Activated CD4-positive, alpha-beta memory T cell treated with anti-CD3 and anti-CD28 coated beads for 36 hours (primary cell): ENCODE measurements at regions of chr19 and their contacts with region 1.

Region 1: GRCh38 chr19:17623224-17623935 is 64.8 kb downstream of the UNC13A start:
- DNase-seq: no peak
- H3K4me3 Mint-ChIP-seq: no peak overlapping the region
- H3K27ac Mint-ChIP-seq: no peak overlapping the region
- H3K4me1 Mint-ChIP-seq: peaks cover 3% of the 10 kb centered on the region
- H3K27me3 Mint-ChIP-seq: peaks cover 5% of the 10 kb centered on the region

Region 2: DNA sequence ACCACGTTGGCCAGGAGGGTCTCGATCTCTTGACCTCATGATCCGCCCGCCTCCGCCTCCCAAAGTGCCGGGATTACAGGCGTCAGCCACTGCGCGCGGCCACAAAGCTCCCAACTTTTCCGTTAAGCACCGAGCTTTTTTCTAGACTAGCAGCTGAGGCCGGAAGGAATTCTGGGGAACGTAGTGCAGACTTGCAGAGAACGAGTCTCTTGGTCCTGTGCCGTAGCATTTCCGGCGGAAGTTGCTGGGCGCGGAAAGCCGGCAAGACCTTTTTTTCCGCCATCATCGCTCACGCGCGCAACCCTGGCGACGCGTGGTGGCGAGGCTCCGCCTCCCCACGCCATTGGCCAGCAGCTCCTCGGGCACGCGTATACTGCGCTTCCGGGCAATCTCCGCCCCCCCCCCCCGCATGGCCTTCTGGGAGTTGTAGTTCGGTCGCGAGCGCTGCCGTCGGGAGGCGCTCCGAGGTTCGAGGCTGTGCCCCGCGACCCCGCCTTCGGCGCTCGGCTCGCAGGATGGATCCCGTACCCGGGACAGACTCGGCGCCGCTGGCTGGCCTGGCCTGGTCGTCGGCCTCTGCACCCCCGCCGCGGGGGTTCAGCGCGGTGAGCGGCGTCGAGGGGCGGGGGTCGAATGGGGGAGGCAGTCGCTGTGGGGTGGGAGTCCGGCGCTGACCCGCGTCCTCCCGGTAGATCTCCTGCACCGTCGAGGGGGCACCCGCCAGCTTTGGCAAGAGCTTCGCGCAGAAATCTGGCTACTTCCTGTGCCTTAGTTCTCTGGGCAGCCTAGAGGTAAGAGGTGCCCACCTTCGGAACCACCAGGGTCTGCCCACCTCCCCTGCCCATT is 203.5 kb before region 1 on chr19 and contains the start of gene MVB12A:
- CTCF ChIA-PET with region 1: no interaction called
- POLR2A ChIA-PET with region 1: no interaction called
- intact Hi-C with region 1: no loop called
- DNase-seq: peak; percentile 98
- H3K4me3 Mint-ChIP-seq: peak within 1 kb of the TSS; percentile 86
- H3K27ac Mint-ChIP-seq: peak within 1 kb of the TSS; percentile 87
- H3K4me1 Mint-ChIP-seq: peaks cover 19% of the 10 kb centered on the region
- H3K27me3 Mint-ChIP-seq: no peaks in the 10 kb centered on the region
- total RNA-seq, gene MVB12A: 36.5 to 42.4 TPM

Region 3: GRCh38 chr19:17570791-17571190 is 52.6 kb before region 1 on chr19:
- CTCF ChIA-PET with region 1: interaction called, 10 read pairs
- POLR2A ChIA-PET with region 1: no interaction called
- intact Hi-C with region 1: no loop called
- DNase-seq: no peak
- H3K4me3 Mint-ChIP-seq: no peak overlapping the region
- H3K27ac Mint-ChIP-seq: no peak overlapping the region
- H3K4me1 Mint-ChIP-seq: no peaks in the 10 kb centered on the region
- H3K27me3 Mint-ChIP-seq: no peaks in the 10 kb centered on the region

Region 4: DNA sequence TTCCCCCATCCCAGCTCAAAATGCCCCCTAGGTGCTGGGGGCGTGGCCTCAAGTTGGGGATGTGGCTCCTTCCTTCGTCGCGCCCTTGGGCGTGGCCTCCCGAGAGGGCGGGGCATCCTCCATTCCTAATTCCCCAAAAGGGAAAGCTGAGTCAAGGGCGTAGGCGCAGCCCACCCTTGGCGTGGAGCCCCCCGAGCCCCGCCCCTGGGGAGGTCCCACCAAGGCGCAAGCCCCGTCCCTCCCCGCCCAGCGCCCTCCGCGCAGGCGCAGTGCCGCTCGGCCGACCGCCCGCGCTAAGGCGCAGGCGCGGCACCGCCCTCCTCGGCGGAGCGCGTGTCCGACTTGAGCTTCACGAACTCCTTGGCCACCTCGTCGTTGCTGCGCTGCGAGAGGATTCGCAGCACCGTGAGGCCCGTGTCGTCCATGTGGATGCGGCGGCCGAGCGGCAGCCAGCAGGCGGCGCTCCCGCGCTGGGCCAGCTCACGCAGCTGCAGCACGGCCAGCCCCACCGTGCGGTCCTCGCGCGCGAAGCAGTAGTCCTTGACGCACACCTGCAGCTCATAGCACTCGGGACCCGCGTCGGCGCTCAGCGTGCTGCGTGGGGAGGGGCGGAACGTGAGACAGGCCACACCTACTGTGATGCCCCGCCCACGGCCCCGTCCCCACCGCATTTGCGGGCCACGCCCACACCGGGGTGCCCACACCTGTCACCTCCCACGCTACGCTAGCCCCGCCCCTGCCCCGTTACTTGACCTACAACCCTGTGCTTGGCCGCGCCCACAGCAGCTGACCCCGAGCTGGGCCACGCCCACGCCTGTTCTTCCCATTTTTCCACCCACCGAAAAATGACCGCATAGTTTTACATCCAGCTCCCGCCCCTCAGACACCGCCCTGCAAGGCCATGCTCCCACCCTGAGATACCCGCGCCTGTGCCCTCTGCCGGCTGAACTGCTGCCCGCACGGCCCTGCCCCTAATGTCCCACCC is 17.3 kb before region 1 on chr19:
- CTCF ChIA-PET with region 1: interaction called, 25 read pairs
- POLR2A ChIA-PET with region 1: no interaction called
- intact Hi-C with region 1: no loop called
- DNase-seq: peak; percentile 85
- H3K4me3 Mint-ChIP-seq: peak overlapping the region; percentile 68
- H3K27ac Mint-ChIP-seq: peak overlapping the region; percentile 63
- H3K4me1 Mint-ChIP-seq: peaks cover 7% of the 10 kb centered on the region
- H3K27me3 Mint-ChIP-seq: peaks cover 28% of the 10 kb centered on the region